Activated T-helper 2 cell treated with anti-CD3 and anti-CD28 coated beads, Interferon-gamma antibody, Interleukin-2, Interleukin-4, amounts not matched to agents 10 μg/mL and 5 μg/mL and 100 μg/mL, durations not matched to agents 14 hours and 24 hours and 36 hours (primary cell): ENCODE measurements at regions of chr1 and their contacts with region 1.

Region 1: DNA sequence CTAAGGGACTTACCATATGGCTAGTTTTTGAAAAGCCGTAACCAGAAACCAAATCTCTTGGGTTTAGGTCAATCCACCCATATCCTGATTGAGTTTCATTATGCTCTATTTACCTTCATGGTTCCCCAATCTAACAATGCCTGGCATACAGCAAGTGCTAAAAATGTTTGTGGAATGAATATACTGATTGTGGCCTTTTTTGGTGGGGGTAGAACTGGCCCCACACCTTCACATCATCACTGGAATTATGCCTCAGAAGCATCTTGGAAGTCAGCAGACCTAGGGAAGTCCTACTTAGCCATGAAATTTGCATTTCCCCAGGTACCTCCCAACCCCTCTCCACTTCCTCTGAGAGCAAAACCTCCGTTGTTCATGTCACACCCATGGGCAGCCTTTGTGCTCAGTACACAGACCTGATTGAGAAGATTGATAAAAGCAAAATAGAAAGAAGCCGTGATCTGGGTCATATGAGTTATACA is 17.8 kb upstream of the SLAMF1 start:
- DNase-seq: peak; percentile 50
- H3K4me3 Mint-ChIP-seq: peak overlapping the region; percentile 15
- H3K27ac Mint-ChIP-seq: peak overlapping the region; percentile 91
- H3K4me1 Mint-ChIP-seq: peaks cover 62% of the 10 kb centered on the region
- H3K27me3 Mint-ChIP-seq: no peaks in the 10 kb centered on the region

Region 2: GRCh38 chr1:160646711-160647328 is 17.8 kb before region 1 on chr1 and contains the start of gene SLAMF1:
- intact Hi-C with region 1: loop called (anchors 2 kb)
- DNase-seq: no peak
- H3K4me3 Mint-ChIP-seq: peak within 1 kb of the TSS; percentile 97
- H3K27ac Mint-ChIP-seq: peak within 1 kb of the TSS; percentile 99
- H3K4me1 Mint-ChIP-seq: peaks cover 60% of the 10 kb centered on the region
- H3K27me3 Mint-ChIP-seq: no peaks in the 10 kb centered on the region
- total RNA-seq, gene SLAMF1: 74.6 and 78.8 TPM in 2 replicates